ENCODE measurements at regions of chr15 and their contacts with region 1.

Region 1: DNA sequence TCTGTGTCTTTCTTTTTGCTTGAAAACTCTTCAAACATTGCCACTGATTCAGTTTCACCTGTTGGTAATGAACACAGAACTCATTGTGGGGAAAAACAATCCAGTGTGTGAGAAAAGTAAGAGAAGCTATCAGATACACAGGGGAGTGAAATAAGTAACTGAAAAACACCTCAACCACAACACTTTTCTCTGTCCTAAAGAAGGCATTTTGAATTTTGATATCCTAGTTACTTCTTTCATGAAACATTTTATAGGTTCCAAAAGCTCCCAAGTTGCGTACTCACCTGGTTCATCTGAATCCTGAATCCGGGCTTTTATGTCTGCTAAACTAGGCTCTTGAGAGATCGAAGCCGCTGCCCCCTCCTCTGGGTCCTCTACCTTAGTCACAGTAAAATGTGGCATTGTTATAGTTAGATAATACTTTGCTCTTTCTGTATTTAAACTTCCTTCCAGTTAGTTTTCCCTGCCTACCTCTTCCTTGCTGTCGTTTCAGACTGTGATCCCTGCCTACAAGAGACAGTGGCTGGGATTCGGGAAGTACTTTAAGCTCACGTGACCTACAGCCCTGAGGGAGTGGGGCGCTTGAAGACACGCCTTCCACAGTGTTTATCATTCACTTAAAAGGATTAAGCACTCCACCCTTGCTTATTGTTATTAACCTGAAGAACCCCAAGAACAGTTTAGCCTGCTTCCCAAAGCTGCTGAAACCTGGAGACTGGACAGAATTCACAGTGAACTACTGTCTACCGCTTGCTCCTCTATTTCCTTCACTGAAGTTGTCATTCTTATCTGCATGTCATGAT is 19.1 kb downstream of the SLC12A6 start:
- DNase-seq: no peak
- ATAC-seq: peak; percentile 84
- H3K4me3 ChIP-seq: peak overlapping the region; percentile 68
- H3K27ac ChIP-seq: peak overlapping the region; percentile 90
- H3K4me1 ChIP-seq: peaks cover 16% of the 10 kb centered on the region
- H3K27me3 ChIP-seq: no peaks in the 10 kb centered on the region
- CTCF ChIP-seq: no peak
- EP300 ChIP-seq: no peak
- POLR2A ChIP-seq: no peak; the same call in 1 of the 2 replicates
- RAD21 ChIP-seq: no peak

Region 2: GRCh38 chr15:34331809-34332208 is 13.3 kb after region 1 on chr15:
- CTCF ChIA-PET with region 1: interaction called, 26 read pairs
- POLR2A ChIA-PET with region 1: interaction called, 60 read pairs
- RAD21 ChIA-PET with region 1: interaction called, 55 read pairs
- SMC1A ChIA-PET with region 1: interaction called, 107 read pairs
- in situ Hi-C with region 1: no loop called
- intact Hi-C with region 1: no loop called
- DNase-seq: no peak
- ATAC-seq: peak; percentile 13; the same call in 2 of the 3 replicates
- H3K4me3 ChIP-seq: peak overlapping the region; percentile 8
- H3K27ac ChIP-seq: peak overlapping the region; percentile 94
- H3K4me1 ChIP-seq: peaks cover 28% of the 10 kb centered on the region
- H3K27me3 ChIP-seq: no peaks in the 10 kb centered on the region
- CTCF ChIP-seq: no peak
- EP300 ChIP-seq: no peak
- POLR2A ChIP-seq: no peak
- RAD21 ChIP-seq: no peak

Region 3: DNA sequence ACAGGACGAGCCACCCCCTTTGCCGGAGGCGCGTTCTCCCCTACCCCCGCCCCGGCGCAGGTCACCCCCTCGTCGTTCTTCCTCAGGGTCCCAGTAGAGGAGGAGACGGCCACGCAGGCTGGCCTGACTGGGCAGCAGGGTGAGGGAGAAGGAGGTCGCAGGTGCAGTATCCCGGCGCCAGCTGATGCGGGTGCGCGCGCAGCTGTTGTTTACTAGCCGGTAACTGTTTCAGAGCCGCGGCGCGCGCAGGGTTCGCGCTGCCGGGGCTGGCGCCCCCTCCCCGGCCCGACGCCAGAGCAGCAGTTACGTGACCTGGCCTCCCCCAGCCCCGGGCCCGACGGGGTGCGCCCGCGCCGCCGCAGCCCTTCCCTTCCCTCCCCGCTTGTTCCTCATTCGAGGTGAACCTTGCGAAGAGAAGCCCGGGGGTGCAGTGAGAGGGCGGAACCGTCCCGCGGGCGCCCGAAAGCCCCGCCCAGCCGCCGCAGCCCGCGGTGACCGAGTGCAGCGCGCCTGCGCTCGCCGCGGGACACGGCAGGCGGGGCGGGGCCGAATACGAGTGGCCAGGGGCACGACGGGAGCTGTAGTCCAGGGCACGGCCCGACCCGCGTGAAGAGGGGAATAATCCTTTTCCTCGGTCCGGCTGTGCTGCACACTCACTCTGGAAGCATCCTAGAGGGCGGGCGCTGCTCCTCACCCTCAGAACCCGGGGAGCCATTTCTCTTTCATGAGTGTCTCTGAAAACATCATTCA is 19.3 kb after region 1 on chr15 and contains the start of gene SLC12A6:
- CTCF ChIA-PET with region 1: interaction called, 26 read pairs
- POLR2A ChIA-PET with region 1: interaction called, 26 read pairs
- RAD21 ChIA-PET with region 1: interaction called, 10 read pairs
- SMC1A ChIA-PET with region 1: interaction called, 89 read pairs
- in situ Hi-C with region 1: no loop called
- intact Hi-C with region 1: no loop called
- DNase-seq: no peak
- ATAC-seq: peak; percentile 81
- H3K4me3 ChIP-seq: peak within 1 kb of the TSS; percentile 72
- H3K27ac ChIP-seq: peak within 1 kb of the TSS; percentile 94
- H3K4me1 ChIP-seq: peaks cover 14% of the 10 kb centered on the region
- H3K27me3 ChIP-seq: no peaks in the 10 kb centered on the region
- CTCF ChIP-seq: no peak
- EP300 ChIP-seq: no peak
- POLR2A ChIP-seq: peak; percentile 74
- RAD21 ChIP-seq: no peak
- polyA plus RNA-seq, gene SLC12A6: 4.7 to 4.8 TPM

Region 4: GRCh38 chr15:34783991-34784390 is 465.5 kb after region 1 on chr15:
- CTCF ChIA-PET with region 1: no interaction called
- POLR2A ChIA-PET with region 1: no interaction called
- RAD21 ChIA-PET with region 1: no interaction called
- SMC1A ChIA-PET with region 1: no interaction called
- in situ Hi-C with region 1: no loop called
- intact Hi-C with region 1: no loop called
- DNase-seq: no peak
- ATAC-seq: no peak
- H3K4me3 ChIP-seq: no peak overlapping the region
- H3K27ac ChIP-seq: no peak overlapping the region
- H3K4me1 ChIP-seq: no peaks in the 10 kb centered on the region
- H3K27me3 ChIP-seq: peaks cover 0 to 2% of the 10 kb centered on the region in 2 experiments; a peak in 1 of 4 replicates
- CTCF ChIP-seq: no peak
- EP300 ChIP-seq: no peak
- POLR2A ChIP-seq: no peak
- RAD21 ChIP-seq: no peak